Activated CD4-positive, alpha-beta memory T cell treated with anti-CD3 and anti-CD28 coated beads, Interleukin-2, amount 10 ng/mL, durations not matched to agents 7 days and 5 days (primary cell): ENCODE measurements at regions of chr9 and their contacts with region 1.

Region 1: GRCh38 chr9:96317335-96317980 is 15.5 kb upstream of the HSD17B3 start:
- DNase-seq: peak; percentile 49
- H3K4me3 Mint-ChIP-seq: no peak overlapping the region
- H3K27ac Mint-ChIP-seq: no peak overlapping the region
- H3K4me1 Mint-ChIP-seq: no peaks in the 10 kb centered on the region
- H3K27me3 Mint-ChIP-seq: peaks cover 2% of the 10 kb centered on the region

Region 2: GRCh38 chr9:95980262-95981125 is 337.0 kb before region 1 on chr9:
- CTCF ChIA-PET with region 1: no interaction called
- POLR2A ChIA-PET with region 1: no interaction called
- DNase-seq: no peak
- H3K4me3 Mint-ChIP-seq: no peak overlapping the region
- H3K27ac Mint-ChIP-seq: no peak overlapping the region
- H3K4me1 Mint-ChIP-seq: peaks cover 19% of the 10 kb centered on the region
- H3K27me3 Mint-ChIP-seq: no peaks in the 10 kb centered on the region

Region 3: DNA sequence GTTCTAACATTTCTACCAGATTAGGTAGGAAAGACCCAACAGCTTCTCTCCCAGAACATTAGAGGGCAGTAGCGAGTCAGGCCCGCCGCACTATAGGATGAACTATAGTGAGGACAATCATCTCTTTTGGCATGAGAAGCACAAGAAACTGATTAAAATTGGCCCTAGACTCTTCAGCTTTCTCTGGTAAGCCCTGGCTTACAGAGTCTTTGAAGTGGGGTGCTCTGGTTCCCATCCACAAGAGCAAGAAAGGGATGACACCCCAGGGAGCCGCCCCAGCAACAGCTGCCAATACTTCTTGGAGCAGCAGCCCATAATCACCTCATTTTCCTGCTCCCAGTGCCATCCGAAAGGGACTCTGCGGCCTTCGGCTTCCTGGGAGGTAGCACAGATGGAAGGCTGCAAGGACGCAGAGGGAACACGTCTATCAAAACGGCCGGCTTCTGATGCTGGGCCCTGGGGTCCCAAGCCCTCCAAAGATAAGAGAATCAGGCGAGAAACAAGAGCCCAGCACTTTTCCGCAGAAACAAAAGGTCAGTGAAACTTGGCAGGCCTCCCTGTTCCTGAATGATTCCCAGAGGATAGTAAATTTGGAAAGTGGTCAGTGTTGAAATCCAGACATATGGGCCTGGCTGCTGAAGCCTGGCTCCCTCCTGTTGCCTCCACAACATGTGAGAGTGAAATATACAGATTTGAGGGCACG is 84.8 kb before region 1 on chr9:
- CTCF ChIA-PET with region 1: interaction called, 29 read pairs
- POLR2A ChIA-PET with region 1: no interaction called
- DNase-seq: peak; percentile 44
- H3K4me3 Mint-ChIP-seq: no peak overlapping the region
- H3K27ac Mint-ChIP-seq: no peak overlapping the region
- H3K4me1 Mint-ChIP-seq: no peaks in the 10 kb centered on the region
- H3K27me3 Mint-ChIP-seq: peaks cover 52% of the 10 kb centered on the region

Region 4: DNA sequence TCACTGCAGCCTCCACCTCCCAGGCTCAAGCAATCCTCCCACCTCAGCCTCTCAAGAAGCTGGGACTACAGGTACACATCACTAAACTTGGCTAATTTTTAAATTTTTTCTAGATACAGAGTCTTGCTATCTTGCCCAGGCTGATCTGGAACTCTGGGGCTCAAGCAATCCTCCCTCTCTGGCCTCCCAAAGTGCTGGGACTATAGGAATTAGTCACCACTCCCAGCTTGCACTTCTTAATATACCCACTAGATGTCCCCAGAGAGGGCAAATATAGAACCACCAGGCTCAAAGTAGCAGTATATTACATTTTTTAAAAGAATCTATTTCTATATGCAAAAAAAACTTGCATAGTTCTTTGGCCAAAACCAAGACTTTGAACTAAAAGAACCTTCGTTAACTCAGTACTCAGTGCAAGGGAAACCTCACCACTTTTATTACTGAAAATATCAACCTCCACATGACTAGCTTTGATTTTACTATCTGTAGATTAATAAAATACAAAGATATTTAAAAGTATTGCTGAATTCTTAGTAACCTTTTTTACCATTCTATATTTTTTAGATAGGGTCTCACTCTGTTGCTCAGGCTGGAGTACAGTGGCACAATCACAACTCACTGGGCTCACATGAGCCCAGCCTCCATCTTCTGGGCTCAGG is 10.4 kb after region 1 on chr9:
- CTCF ChIA-PET with region 1: interaction called, 13 read pairs
- POLR2A ChIA-PET with region 1: no interaction called
- DNase-seq: peak; percentile 31
- H3K4me3 Mint-ChIP-seq: no peak overlapping the region
- H3K27ac Mint-ChIP-seq: no peak overlapping the region
- H3K4me1 Mint-ChIP-seq: no peaks in the 10 kb centered on the region
- H3K27me3 Mint-ChIP-seq: no peaks in the 10 kb centered on the region

Region 5: DNA sequence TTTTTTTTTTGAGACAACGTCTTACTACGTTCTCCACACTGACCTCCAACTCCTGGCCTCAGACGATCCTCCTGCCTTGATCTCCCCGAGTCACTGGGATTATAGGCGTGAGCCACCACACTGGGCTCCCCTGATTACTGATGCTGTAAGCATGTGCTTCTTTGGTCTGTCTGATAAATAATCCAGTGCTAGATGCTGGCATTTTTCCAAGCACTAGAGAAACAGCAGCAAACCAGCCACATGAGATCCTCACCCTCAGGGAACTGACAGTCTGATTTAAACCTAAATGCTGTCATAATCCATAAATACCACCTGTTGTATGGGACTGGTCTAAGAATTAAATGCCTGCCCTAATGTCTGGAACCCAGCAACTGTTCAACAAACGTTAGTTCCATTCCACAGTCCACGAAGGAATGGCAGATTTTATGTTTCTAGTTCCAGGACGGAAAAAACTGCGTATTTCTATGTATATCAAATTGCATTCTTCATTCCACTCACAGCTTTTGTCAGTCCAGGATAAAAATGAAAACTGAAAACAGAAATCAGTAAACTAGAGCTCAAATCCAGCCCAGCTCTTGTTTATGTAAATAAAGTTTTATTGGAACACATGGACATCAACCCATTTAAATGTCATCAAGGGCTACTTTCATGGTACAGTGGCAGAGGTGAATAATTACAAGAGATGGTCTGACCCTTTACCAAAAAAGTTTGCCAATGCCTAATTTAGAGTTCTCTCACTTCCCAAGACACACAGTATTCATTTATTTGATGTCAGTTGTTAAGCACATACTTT is 45.9 kb after region 1 on chr9:
- CTCF ChIA-PET with region 1: no interaction called
- POLR2A ChIA-PET with region 1: no interaction called
- DNase-seq: no peak
- H3K4me3 Mint-ChIP-seq: no peak overlapping the region
- H3K27ac Mint-ChIP-seq: no peak overlapping the region
- H3K4me1 Mint-ChIP-seq: no peaks in the 10 kb centered on the region
- H3K27me3 Mint-ChIP-seq: no peaks in the 10 kb centered on the region